Heart left ventricle (tissue), 16 donors: ENCODE measurements at regions of chr17 and their contacts with region 1.

Region 1: GRCh38 chr17:47304031-47304585 is 19.6 kb upstream of the EFCAB13 start:
- DNase-seq: no peak
- ATAC-seq: no peak
- H3K4me3 ChIP-seq: no peak overlapping the region
- H3K27ac ChIP-seq: peak overlapping the region in 1 of 12 donors; percentile 56
- H3K4me1 ChIP-seq: peaks cover 0 to 15% (median 4%) of the 10 kb centered on the region in 12 donors
- H3K27me3 ChIP-seq: no peaks in the 10 kb centered on the region
- CTCF ChIP-seq: no peak
- POLR2A ChIP-seq: no peak

Region 2: GRCh38 chr17:47253541-47254402 is 50.3 kb before region 1 on chr17 and contains the start of gene ITGB3:
- intact Hi-C with region 1: loop called in 2 of 10 experiments (anchors 5 kb)
- DNase-seq: peak; percentile 80 to 87 (median 82)
- ATAC-seq: peak; percentile 59 to 98 (median 94)
- H3K4me3 ChIP-seq: peak within 1 kb of the TSS; percentile 61 to 88 (median 80)
- H3K27ac ChIP-seq: peak within 1 kb of the TSS in 11 of 12 donors; percentile 51 to 93 (median 79)
- H3K4me1 ChIP-seq: peaks cover 0 to 33% (median 9%) of the 10 kb centered on the region in 12 donors
- H3K27me3 ChIP-seq: peaks cover 0 to 25% (median 0%) of the 10 kb centered on the region in 9 donors
- CTCF ChIP-seq: peak in 11 of 12 donors; percentile 13 to 69 (median 49)
- POLR2A ChIP-seq: peak in 1 of 2 donors; percentile 13
- total RNA-seq, gene ITGB3: 2.6 to 14.8 (median 4.8) TPM